PC-9 (cell line): ENCODE measurements at regions of chr3 and their contacts with region 1.

Region 1: DNA sequence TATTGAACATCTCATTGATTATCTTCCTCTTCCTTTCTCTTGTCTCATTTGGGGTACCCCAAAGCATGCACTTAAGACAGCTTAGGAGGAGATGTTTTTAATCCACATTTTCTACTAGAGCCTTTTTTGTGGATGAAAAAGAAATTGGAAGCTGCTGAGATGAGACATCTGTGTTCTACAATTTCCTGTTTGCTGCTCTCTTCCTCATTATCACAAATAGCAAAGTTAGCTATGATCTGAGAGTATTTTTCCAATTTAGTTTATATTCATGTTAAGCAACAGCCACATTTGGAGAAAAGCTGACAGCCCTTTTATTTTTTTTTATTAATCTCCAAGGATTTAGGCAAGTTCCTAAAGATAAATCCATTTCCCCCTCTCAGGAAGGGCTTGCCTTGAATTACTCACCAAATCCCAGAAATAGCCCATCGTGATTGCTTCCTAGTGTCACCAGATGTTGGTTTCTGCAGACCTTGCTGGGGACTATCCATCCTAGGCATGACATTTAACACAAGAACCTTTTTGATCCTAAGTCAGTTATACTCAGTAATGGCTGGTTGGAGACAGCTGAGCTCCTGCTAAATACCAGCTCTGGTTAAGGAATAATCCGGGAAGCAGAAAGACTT is 70.8 kb upstream of the FILIP1L start:
- DNase-seq: no peak
- H3K4me3 ChIP-seq: no peak overlapping the region
- H3K27ac ChIP-seq: no peak overlapping the region
- H3K4me1 ChIP-seq: no peaks in the 10 kb centered on the region; the same call in 1 of the 2 replicates
- H3K27me3 ChIP-seq: no peaks in the 10 kb centered on the region
- CTCF ChIP-seq: no peak

Region 2: DNA sequence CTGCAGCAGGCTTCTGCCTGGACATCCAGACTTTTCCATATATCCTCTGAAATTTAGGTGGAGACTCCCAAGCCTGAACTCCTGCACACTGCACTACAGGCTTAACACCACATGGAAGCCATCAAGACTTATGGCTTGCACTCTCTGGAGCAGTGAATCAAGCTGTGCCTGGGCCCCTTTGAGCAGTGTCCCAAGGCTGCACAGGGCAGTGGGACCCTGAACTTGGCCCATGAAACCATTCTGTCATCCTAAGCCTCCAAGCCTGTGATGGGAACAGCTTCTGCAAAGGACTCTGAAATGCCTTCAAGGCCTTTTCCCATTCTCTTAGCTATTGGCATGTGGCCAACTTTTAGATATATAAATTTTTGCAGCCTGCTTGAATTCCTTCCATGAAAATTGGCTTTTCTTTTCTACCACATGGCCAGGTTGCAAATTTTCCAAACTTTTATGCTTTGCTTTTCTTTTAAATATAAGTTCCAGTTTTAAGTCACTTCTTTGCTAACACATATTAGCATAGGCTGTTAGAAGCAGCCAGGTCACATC is 1025.8 kb before region 1 on chr3:
- CTCF ChIA-PET with region 1: no interaction called
- POLR2A ChIA-PET with region 1: no interaction called
- intact Hi-C with region 1: no loop called
- DNase-seq: no peak
- H3K4me3 ChIP-seq: no peak overlapping the region
- H3K27ac ChIP-seq: no peak overlapping the region
- H3K4me1 ChIP-seq: no peaks in the 10 kb centered on the region
- H3K27me3 ChIP-seq: no peaks in the 10 kb centered on the region
- CTCF ChIP-seq: no peak

Region 3: DNA sequence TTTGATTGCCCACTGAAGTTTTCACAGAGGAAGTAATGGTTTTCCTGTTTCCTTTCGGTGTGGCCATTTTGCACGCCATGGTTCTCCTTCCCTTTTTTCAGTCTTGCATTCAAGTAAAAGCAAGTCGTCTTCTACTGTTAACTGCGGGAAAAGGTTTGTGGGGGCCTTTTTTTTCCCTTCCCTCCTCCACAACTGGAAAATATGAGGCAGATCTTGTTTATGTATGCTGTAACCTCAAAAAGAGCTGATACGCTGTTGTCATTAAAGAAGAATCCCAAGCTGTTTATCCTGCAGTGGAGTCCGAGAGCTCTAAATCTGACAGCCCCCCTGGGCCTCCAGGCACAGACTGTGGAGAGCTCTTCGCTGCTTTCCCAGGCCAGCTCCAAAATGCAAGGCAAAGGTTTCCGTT is 111.2 kb before region 1 on chr3:
- CTCF ChIA-PET with region 1: no interaction called
- POLR2A ChIA-PET with region 1: interaction called, 10 read pairs
- intact Hi-C with region 1: no loop called
- DNase-seq: no peak
- H3K4me3 ChIP-seq: no peak overlapping the region
- H3K27ac ChIP-seq: no peak overlapping the region
- H3K4me1 ChIP-seq: no peaks in the 10 kb centered on the region
- H3K27me3 ChIP-seq: no peaks in the 10 kb centered on the region
- CTCF ChIP-seq: no peak

Region 4: DNA sequence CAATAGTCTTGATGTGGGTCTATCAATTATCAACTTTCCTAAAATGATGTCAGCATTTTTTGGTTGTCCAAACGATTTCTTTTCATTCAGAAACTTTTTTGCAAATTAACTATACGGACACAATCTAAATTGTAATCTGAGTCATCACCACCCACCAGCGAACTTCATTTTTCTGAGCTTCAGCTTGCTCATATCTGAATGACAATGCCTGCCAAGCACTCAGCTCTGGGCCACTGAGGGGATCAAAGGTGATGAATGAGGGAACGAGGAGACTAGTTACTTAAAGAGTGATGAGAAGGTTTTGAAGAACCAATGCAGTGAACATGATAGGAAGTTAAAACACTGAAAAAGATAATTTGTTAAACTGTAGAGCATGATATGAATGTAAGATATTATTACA is 60.9 kb after region 1 on chr3:
- CTCF ChIA-PET with region 1: no interaction called
- POLR2A ChIA-PET with region 1: no interaction called
- intact Hi-C with region 1: loop called (anchors 10 kb)
- DNase-seq: no peak
- H3K4me3 ChIP-seq: no peak overlapping the region
- H3K27ac ChIP-seq: no peak overlapping the region
- H3K4me1 ChIP-seq: no peaks in the 10 kb centered on the region
- H3K27me3 ChIP-seq: no peaks in the 10 kb centered on the region
- CTCF ChIP-seq: no peak